GM12878 (cell line): ENCODE measurements at regions of chr3 and their contacts with region 1.

Region 1: DNA sequence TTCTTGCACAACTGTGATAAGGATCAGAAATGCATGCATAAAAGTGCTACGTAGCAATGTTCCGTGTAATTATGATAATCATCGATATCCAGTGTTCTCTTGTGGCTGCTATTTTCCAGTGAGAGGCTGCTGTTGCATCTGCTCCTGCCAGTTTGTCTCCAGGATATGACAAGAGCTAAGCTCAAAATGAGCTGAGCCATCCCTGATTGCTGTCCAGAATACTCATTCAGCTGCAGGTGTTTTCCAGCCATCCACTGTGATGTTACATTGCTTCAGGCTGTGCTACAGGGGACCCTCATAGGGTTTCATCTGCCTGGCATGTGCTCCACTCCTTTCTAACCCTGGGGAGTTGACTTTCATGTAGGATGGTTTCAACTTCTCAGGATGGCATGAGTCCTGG is 976.0 kb downstream of the ROBO1 start:
- DNase-seq: no peak
- ATAC-seq: no peak; the same call in 1 of the 3 replicates
- H3K4me3 ChIP-seq: no peak overlapping the region
- H3K27ac ChIP-seq: no peak overlapping the region
- H3K4me1 ChIP-seq: no peaks in the 10 kb centered on the region
- H3K27me3 ChIP-seq: no peaks in the 10 kb centered on the region
- CTCF ChIP-seq: no peak
- EP300 ChIP-seq: no peak
- POLR2A ChIP-seq: no peak
- RAD21 ChIP-seq: no peak

Region 2: GRCh38 chr3:77236118-77236517 is 1555.6 kb before region 1 on chr3:
- CTCF ChIA-PET with region 1: no interaction called
- POLR2A ChIA-PET with region 1: no interaction called
- RAD21 ChIA-PET with region 1: no interaction called
- SMC1A ChIA-PET with region 1: no interaction called
- in situ Hi-C with region 1: no loop called
- intact Hi-C with region 1: no loop called
- DNase-seq: no peak
- ATAC-seq: no peak
- H3K4me3 ChIP-seq: no peak overlapping the region
- H3K27ac ChIP-seq: no peak overlapping the region
- H3K4me1 ChIP-seq: no peaks in the 10 kb centered on the region
- H3K27me3 ChIP-seq: no peaks in the 10 kb centered on the region
- CTCF ChIP-seq: no peak
- EP300 ChIP-seq: no peak
- POLR2A ChIP-seq: no peak
- RAD21 ChIP-seq: no peak

Region 3: DNA sequence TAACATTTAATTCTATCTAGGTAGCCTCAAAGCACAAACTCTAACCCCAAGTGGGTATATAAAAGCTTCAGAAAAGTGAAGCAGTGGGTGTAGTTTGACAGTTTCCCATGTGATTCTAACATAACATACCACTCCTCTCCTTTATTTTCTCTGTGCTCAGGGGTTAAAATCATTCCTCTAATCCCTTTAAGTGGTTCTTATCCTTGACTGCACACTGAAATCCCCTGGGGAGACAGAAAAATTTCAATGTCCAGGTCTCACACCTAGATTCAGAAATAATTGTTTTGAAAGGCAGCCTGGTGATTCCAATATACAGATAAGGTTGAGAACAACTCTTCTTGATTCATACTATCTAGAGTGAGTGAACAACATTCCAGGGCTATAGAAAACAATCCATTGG is 10.4 kb before region 1 on chr3:
- CTCF ChIA-PET with region 1: interaction called, 4 read pairs
- POLR2A ChIA-PET with region 1: no interaction called
- RAD21 ChIA-PET with region 1: interaction called, 3 read pairs
- SMC1A ChIA-PET with region 1: interaction called, 13 read pairs
- in situ Hi-C with region 1: no loop called
- intact Hi-C with region 1: no loop called
- DNase-seq: no peak
- ATAC-seq: no peak
- H3K4me3 ChIP-seq: no peak overlapping the region
- H3K27ac ChIP-seq: no peak overlapping the region
- H3K4me1 ChIP-seq: no peaks in the 10 kb centered on the region
- H3K27me3 ChIP-seq: no peaks in the 10 kb centered on the region
- CTCF ChIP-seq: no peak
- EP300 ChIP-seq: no peak
- POLR2A ChIP-seq: no peak
- RAD21 ChIP-seq: no peak

Region 4: GRCh38 chr3:78804251-78805037 is 12.7 kb after region 1 on chr3:
- CTCF ChIA-PET with region 1: interaction called, 7 read pairs
- POLR2A ChIA-PET with region 1: interaction called, 4 read pairs
- RAD21 ChIA-PET with region 1: interaction called, 11 read pairs
- SMC1A ChIA-PET with region 1: interaction called, 8 read pairs
- in situ Hi-C with region 1: no loop called
- intact Hi-C with region 1: no loop called
- DNase-seq: no peak
- ATAC-seq: no peak
- H3K4me3 ChIP-seq: no peak overlapping the region
- H3K27ac ChIP-seq: no peak overlapping the region
- H3K4me1 ChIP-seq: no peaks in the 10 kb centered on the region
- H3K27me3 ChIP-seq: no peaks in the 10 kb centered on the region
- CTCF ChIP-seq: no peak
- EP300 ChIP-seq: no peak
- POLR2A ChIP-seq: no peak
- RAD21 ChIP-seq: no peak